ENCODE measurements at regions of chr13 and their contacts with region 1.

Region 1: GRCh38 chr13:95536632-95537241 is 15.8 kb upstream of the CLDN10 start:
- DNase-seq: peak; percentile 15
- ATAC-seq: no peak
- H3K4me3 ChIP-seq: no peak overlapping the region
- H3K27ac ChIP-seq: no peak overlapping the region
- H3K4me1 ChIP-seq: peaks cover 0 to 30% of the 10 kb centered on the region in 2 experiments; a peak in 2 of 4 replicates
- H3K27me3 ChIP-seq: no peaks in the 10 kb centered on the region
- CTCF ChIP-seq: peak; percentile 9 to 59 (median 35); a peak in 4 of 6 replicates
- POLR2A ChIP-seq: no peak
- RAD21 ChIP-seq: peak; percentile 54; the same call in 1 of the 2 replicates

Region 2: DNA sequence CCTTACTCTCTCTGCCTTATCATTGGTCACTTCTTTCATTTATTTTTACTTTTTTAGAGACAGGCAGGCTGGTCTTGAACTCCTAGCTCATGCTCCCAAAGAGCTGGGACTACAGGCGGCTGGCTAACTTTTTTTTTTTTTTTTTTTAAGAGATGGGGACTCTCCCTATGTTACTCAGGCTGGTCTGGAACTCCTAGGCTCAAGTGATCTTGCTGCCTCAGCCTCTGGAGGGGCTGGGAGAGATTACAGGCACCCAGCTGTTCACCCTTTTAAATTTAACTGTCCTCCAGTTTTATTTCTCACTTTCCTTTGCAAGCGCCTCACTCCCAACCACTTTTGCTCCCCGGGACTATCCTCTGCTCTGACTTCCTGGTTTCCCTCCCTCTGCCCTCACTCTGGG is 10.2 kb after region 1 on chr13:
- CTCF ChIA-PET with region 1: interaction called, 3 read pairs
- POLR2A ChIA-PET with region 1: no interaction called
- RAD21 ChIA-PET with region 1: no interaction called
- intact Hi-C with region 1: loop called (anchors 1 kb)
- DNase-seq: no peak
- ATAC-seq: no peak
- H3K4me3 ChIP-seq: no peak overlapping the region
- H3K27ac ChIP-seq: no peak overlapping the region
- H3K4me1 ChIP-seq: 0 out of 4 replicates have a peak, but pooled peaks cover 0 to 7% of the 10 kb centered on the region in 2 experiments
- H3K27me3 ChIP-seq: no peaks in the 10 kb centered on the region
- CTCF ChIP-seq: no peak
- POLR2A ChIP-seq: no peak
- RAD21 ChIP-seq: no peak

Region 3: GRCh38 chr13:95660981-95661581 is 124.3 kb after region 1 on chr13:
- CTCF ChIA-PET with region 1: interaction called, 15 read pairs
- POLR2A ChIA-PET with region 1: no interaction called
- RAD21 ChIA-PET with region 1: interaction called in 1 of 2 experiments, 4 read pairs
- intact Hi-C with region 1: loop called (anchors 5 kb)
- DNase-seq: peak; percentile 28
- ATAC-seq: no peak; the same call in 1 of the 2 replicates
- H3K4me3 ChIP-seq: no peak overlapping the region
- H3K27ac ChIP-seq: no peak overlapping the region
- H3K4me1 ChIP-seq: no peaks in the 10 kb centered on the region
- H3K27me3 ChIP-seq: no peaks in the 10 kb centered on the region
- CTCF ChIP-seq: peak; percentile 59 to 74 (median 64); a peak in 5 of 6 replicates
- POLR2A ChIP-seq: no peak
- RAD21 ChIP-seq: peak; percentile 57

Region 4: DNA sequence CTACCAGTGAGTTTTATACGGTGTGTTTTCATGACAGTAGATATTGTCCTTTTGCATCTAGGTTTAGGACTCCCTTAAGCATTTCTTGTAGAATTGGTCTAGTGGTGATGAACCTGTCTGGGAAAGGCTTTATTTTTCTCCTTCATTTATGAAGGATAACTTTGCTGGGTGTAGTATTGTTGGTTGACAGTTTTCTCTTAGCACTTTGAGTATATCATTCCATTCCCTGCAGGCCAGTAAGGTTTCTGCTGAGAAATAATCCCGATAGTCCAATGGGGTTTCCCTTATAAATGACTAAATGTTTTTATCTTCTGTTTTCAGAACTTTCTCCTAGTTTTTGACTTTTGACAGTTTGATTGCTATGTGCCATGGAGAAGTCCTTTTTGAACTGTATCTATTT is 197.4 kb after region 1 on chr13:
- CTCF ChIA-PET with region 1: no interaction called
- POLR2A ChIA-PET with region 1: no interaction called
- RAD21 ChIA-PET with region 1: no interaction called
- intact Hi-C with region 1: no loop called
- DNase-seq: no peak
- ATAC-seq: no peak
- H3K4me3 ChIP-seq: no peak overlapping the region
- H3K27ac ChIP-seq: no peak overlapping the region
- H3K4me1 ChIP-seq: no peaks in the 10 kb centered on the region
- H3K27me3 ChIP-seq: no peaks in the 10 kb centered on the region
- CTCF ChIP-seq: no peak
- POLR2A ChIP-seq: no peak
- RAD21 ChIP-seq: no peak

Measured in HCT116 (cell line).